BJ (cell line): ENCODE measurements at regions of chr3 and their contacts with region 1.

Region 1: DNA sequence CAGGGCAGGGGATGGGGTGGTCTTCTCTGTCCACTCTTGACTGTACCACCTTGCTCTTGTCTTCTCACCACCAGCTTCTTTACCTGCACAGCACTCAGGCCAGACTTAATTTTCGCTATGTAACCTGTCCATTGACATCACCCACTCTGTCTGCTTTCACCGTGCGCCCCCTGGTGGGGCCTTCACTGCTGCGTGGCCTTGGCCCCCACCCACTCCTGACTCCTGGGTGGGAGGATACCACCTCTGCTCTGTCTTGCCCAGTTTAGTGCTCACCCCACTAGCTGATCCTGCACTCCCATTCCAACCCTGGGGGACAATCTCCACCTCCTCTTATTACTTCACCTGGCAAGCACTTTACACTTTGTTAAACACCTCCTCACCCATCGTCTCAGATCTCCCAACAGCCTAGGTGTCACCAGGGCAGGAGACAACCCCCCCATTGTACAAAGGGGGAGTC is 17.7 kb downstream of the PTH1R start:
- DNase-seq: no peak
- H3K4me3 ChIP-seq: no peak overlapping the region
- H3K27me3 ChIP-seq: peaks cover 2% of the 10 kb centered on the region; the same call in 1 of the 2 replicates
- CTCF ChIP-seq: peak; percentile 93

Region 2: DNA sequence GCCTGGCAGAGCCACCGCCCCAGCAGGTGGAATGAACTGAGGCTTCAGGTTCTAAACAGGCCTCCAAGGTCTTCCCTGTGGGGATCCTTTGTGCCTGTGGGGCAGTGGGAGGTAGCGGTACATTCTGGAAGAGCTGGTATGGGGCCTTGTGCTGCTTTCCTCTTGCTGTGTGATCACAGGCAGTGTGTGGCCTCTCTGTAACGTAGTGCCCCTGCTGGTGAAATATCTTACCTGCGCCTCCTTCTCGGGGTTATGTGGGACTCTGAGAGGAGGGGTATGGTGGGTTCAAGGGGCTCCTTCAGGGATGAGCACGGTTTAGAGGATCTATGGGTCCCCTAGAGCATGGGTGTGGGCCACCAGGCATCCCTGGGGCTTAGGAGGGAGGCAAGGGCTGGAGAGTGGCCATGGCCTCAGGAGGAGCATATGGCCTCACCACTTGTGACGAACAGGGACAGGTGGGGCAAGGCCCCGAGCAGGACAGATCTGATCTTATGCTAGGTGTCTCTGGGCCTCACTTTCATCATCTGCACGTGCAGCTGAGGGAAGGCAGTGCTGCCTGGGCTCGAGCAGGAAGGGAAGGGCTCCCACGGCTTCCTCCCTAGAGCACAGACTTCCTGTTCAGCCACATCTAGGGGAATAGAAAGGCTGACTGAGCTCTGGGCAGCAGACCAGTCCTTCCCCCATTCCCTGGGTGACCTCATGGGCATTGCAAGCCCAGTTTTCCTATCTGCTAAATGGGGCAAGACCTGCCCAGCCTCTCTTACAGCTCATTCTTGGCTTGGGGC is 199.9 kb before region 1 on chr3:
- CTCF ChIA-PET with region 1: interaction called, 12 read pairs
- POLR2A ChIA-PET with region 1: no interaction called
- DNase-seq: no peak
- H3K4me3 ChIP-seq: no peak overlapping the region
- H3K27me3 ChIP-seq: peaks cover 3% of the 10 kb centered on the region
- CTCF ChIP-seq: peak; percentile 25; the same call in 1 of the 2 replicates

Region 3: DNA sequence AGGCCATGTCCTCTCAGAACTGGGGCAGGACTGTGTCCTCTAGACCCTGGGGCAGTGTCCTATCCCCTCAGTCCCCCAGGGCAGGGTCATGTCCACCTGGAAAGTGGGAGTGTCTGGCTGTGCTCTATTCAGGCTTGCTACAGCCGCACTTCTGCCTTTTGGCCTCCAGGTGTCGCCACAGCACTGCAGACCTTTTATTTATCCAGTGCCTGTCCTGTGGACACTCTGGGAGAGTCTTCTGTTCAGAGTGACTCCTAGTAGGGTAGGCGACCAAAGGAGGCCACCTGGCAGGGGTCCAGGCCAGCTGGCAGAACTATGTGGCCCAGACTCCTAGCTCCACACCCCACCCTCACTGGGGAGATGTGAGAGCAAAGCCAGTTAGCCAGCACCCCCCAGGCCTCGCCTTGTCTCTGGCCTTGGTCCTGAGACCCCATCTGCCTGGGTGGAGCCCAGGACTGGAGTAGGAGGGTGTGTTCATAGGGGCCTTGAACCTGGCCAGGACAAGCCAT is 190.2 kb before region 1 on chr3:
- CTCF ChIA-PET with region 1: interaction called, 55 read pairs
- POLR2A ChIA-PET with region 1: no interaction called
- DNase-seq: no peak
- H3K4me3 ChIP-seq: no peak overlapping the region
- H3K27me3 ChIP-seq: peaks cover 21% of the 10 kb centered on the region
- CTCF ChIP-seq: peak; percentile 91

Region 4: GRCh38 chr3:46768061-46768460 is 127.2 kb before region 1 on chr3:
- CTCF ChIA-PET with region 1: no interaction called
- POLR2A ChIA-PET with region 1: no interaction called
- DNase-seq: no peak
- H3K4me3 ChIP-seq: no peak overlapping the region
- H3K27me3 ChIP-seq: no peaks in the 10 kb centered on the region
- CTCF ChIP-seq: no peak

Region 5: GRCh38 chr3:46848271-46849044 is 46.8 kb before region 1 on chr3:
- CTCF ChIA-PET with region 1: interaction called, 14 read pairs
- POLR2A ChIA-PET with region 1: no interaction called
- DNase-seq: peak; percentile 27
- H3K4me3 ChIP-seq: no peak overlapping the region
- H3K27me3 ChIP-seq: peaks cover 2% of the 10 kb centered on the region; the same call in 1 of the 2 replicates
- CTCF ChIP-seq: peak; percentile 61

Region 6: DNA sequence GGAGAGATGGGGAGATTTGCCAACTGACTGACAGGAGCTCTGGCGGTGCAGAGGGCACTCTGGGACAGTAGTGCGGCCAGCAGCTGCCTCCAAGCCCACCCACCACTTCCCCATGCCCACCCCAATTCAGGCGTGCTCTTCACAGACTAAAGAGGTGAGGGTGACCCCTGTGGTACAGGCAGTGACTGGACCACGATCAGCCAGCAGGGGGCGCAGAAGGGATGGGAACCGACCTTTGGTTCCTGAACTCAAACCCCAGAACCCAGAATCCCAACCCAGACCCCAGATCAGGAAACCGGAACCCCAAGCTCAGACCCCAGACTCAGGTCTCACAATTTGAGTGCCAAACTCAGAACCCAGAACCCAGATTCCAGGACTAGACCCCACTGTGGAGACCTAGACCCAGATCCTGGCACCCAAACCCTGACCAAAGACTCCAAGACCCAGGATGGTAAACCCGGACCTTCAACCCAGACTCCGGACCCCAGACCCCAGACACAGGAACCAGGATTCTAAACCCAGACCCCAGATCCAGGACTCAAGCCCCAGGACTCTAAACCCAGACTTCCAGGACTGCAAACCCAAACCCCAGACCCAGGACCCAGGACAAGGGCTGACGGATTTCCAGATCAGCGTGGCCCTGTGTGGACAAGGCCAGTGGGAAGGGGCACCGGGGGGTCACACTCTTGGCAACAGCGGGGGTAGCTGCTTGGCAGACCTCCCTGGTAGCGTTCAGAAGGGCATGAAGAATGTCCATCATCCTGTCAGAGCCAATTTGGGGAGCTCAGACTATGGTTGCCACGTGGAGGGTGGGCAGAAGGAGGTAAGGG is 28.3 kb before region 1 on chr3:
- CTCF ChIA-PET with region 1: interaction called, 70 read pairs
- POLR2A ChIA-PET with region 1: no interaction called
- DNase-seq: no peak
- H3K4me3 ChIP-seq: no peak overlapping the region
- H3K27me3 ChIP-seq: peaks cover 4% of the 10 kb centered on the region
- CTCF ChIP-seq: peak; percentile 95

Region 7: DNA sequence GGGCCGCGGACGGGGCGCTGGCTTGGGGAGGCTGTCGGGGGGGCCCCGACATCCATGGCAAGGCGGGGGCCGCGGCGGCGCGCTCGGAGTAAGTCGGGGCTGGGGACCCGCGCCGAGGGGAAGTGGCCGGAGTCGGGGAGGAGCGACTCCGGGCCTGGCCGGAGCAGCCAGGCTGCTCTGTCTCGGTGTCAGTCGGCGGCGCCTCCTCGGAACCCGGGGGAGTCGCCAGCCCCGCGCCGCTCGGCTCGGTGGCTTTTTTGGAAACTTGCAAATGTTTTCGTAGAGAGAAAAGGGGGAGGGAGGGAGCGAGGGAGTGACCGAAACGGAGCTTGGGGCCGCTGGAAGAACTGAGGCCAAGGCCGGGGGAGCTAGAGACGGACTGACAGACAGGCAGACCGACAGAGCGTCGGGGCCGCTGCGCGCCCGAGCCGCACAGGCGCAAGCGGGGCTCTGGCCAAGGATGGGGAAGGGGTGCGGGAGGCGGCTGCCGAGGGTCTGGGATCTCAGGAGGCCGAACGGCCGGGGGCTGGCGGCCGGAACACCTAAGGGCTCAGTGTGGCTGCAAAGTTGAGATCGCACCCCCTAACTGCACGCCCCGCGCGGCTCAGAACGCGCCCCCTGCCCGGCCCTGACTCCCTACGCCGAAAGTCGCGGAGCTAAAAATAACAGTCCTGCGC is 12.7 kb before region 1 on chr3:
- CTCF ChIA-PET with region 1: interaction called, 24 read pairs
- POLR2A ChIA-PET with region 1: no interaction called
- DNase-seq: no peak
- H3K4me3 ChIP-seq: peak overlapping the region; percentile 43
- H3K27me3 ChIP-seq: peaks cover 27% of the 10 kb centered on the region
- CTCF ChIP-seq: no peak

Region 8: DNA sequence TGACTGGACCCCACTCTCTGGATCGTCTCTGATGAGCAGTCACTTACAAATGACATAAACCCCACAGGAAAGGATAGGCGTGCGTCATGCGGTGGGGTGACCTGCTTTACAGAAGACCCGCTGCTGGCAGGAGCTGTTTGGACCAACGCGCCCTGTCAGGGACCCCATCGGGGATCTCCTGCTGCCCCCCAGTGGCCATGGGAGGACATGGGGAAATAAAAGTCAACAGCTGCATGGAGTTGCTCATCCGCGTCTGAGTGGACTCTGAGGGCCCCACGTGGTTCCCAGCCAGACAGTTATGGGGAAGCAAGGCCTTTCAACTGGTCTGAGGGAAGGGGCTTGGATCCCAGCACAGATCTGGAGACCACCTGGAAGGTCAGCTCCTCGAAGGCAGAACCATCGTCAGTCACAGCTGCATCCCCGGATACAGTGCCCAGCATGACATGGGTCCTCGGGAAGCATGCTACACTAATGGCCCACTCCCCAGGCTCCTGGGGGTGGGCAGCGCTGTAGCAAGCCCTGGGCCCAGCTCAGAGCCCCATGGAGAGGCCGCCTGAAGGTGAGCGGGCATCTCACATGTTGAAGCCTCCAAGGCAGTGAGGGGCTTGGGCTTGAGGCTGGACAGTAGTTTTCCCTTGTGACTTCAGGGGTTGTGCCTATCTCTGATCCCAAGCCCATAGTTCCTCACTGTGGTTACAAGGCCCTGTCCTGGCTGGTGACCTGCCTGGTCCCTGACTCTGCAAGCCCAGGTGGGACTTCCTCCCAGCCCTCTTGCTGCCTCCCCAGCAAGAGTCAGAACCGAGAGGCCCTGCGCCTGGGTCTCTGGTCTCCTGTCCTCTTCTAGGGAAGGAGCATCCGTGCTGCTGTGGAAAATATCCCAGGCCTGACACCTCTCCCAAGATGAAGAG is 14.6 kb after region 1 on chr3:
- CTCF ChIA-PET with region 1: interaction called, 14 read pairs
- POLR2A ChIA-PET with region 1: no interaction called
- DNase-seq: no peak
- H3K4me3 ChIP-seq: no peak overlapping the region
- H3K27me3 ChIP-seq: no peaks in the 10 kb centered on the region
- CTCF ChIP-seq: peak; percentile 94